ENCODE measurements at regions of chr1 and their contacts with region 1.

Region 1: GRCh38 chr1:221839796-221840395 is 98.0 kb upstream of the DUSP10 start:
- DNase-seq: peak; percentile 33
- H3K4me3 Mint-ChIP-seq: no peak overlapping the region
- H3K27ac Mint-ChIP-seq: peak overlapping the region; percentile 60
- H3K4me1 Mint-ChIP-seq: peaks cover 48% of the 10 kb centered on the region
- H3K27me3 Mint-ChIP-seq: peaks cover 4% of the 10 kb centered on the region

Region 2: GRCh38 chr1:221801773-221802516 is 38.0 kb before region 1 on chr1:
- intact Hi-C with region 1: loop called (anchors 2 kb)
- DNase-seq: no peak
- H3K4me3 Mint-ChIP-seq: no peak overlapping the region
- H3K27ac Mint-ChIP-seq: no peak overlapping the region
- H3K4me1 Mint-ChIP-seq: peaks cover 28% of the 10 kb centered on the region
- H3K27me3 Mint-ChIP-seq: no peaks in the 10 kb centered on the region

Region 3: GRCh38 chr1:221858818-221859611 is 19.1 kb after region 1 on chr1:
- intact Hi-C with region 1: loop called (anchors 2 kb)
- DNase-seq: no peak
- H3K4me3 Mint-ChIP-seq: no peak overlapping the region
- H3K27ac Mint-ChIP-seq: no peak overlapping the region
- H3K4me1 Mint-ChIP-seq: peaks cover 6% of the 10 kb centered on the region
- H3K27me3 Mint-ChIP-seq: peaks cover 9% of the 10 kb centered on the region

Region 4: DNA sequence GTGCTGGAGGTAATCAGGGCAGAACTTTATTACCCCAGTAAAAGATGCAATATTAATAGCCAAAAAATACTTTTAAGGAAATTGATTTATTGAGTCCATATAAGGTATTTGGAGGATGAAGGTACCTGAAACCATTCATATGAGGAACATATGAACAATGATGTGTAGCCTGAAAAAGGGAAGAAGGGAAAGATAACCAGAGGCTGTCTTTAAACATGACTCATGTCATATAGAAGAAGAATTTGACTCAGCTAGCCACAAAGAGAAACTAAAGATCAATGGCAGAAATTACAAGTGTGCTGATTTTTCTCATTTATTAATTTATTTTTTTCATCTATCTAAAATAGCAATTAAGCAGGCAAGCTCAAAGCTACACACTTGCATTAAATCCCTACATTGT is 38.2 kb after region 1 on chr1:
- intact Hi-C with region 1: loop called (anchors 2 kb)
- DNase-seq: no peak
- H3K4me3 Mint-ChIP-seq: no peak overlapping the region
- H3K27ac Mint-ChIP-seq: no peak overlapping the region
- H3K4me1 Mint-ChIP-seq: peaks cover 12% of the 10 kb centered on the region
- H3K27me3 Mint-ChIP-seq: peaks cover 6% of the 10 kb centered on the region

Measured in activated T-helper 2 cell treated with anti-CD3 and anti-CD28 coated beads, Interferon-gamma antibody, Interleukin-2, Interleukin-4, amounts not matched to agents 10 μg/mL and 5 μg/mL and 100 μg/mL, durations not matched to agents 14 hours and 24 hours and 36 hours (primary cell).